Activated CD8-positive, alpha-beta memory T cell treated with anti-CD3 and anti-CD28 coated beads, Interleukin-2, amount 10 ng/mL, durations not matched to agents 7 days and 5 days (primary cell): ENCODE measurements at regions of chr1 and their contacts with region 1.

Region 1: DNA sequence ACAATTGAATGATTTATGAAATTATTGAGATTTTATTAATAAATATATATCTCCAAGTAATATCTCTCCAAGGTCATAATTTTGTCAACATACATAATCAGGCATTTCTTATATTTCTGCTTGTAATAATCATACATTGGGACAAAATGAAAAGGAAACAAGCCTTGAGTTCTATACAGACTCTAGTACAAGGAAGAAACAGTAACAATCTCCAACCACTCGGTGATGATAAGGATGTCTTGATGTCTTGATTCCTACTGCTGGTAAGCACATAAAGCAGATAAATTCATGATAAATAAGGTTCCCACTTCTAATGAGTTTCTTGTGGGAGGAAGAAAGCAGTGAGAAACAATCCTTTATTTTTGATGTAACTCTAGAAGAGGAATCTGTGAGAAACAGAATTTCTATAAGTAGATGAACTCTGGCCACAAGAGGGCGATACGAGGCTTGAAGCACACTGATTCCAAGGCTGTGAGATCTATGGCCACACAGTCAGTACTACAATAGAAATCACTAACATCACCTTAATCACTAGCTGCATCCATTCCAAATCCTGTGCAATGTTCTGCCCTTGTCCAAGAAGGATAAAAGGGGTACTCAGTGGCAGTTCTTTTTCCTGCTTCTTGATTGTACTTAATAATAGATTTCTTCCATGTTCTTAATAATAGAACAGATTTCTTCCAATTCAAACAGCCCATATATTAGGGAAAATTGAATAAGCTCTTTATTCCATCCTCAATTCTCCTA is 41.4 kb upstream of the LRRC8B start:
- DNase-seq: peak; percentile 89
- ATAC-seq: peak; percentile 82
- H3K4me3 Mint-ChIP-seq: no peak overlapping the region
- H3K27ac Mint-ChIP-seq: no peak overlapping the region
- H3K4me1 Mint-ChIP-seq: peaks cover 19% of the 10 kb centered on the region
- H3K27me3 Mint-ChIP-seq: no peaks in the 10 kb centered on the region

Region 2: DNA sequence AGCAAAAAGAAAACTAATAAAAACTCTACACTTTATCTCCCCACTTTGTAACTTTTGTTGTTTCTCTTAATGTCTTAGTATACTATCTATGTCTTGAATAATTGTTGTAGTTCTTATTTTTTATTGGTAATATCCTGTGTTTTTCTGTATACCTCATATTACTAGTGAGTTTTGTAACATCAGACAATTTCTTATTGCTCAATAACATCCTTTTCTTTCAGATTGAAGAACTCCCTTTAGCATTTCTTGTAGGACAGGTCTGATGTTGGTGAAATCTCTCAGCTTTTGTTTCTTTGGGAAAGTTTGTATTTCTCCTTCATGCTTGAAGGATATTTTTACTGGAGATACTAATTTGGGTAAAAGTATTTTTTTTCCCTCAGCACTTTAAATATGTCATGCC is 38.4 kb before region 1 on chr1:
- CTCF ChIA-PET with region 1: no interaction called
- DNase-seq: no peak
- ATAC-seq: no peak
- H3K4me3 Mint-ChIP-seq: no peak overlapping the region
- H3K27ac Mint-ChIP-seq: no peak overlapping the region
- H3K4me1 Mint-ChIP-seq: no peaks in the 10 kb centered on the region
- H3K27me3 Mint-ChIP-seq: peaks cover 12% of the 10 kb centered on the region

Region 3: GRCh38 chr1:89499320-89499719 is 16.1 kb after region 1 on chr1:
- CTCF ChIA-PET with region 1: interaction called, 14 read pairs
- DNase-seq: no peak
- ATAC-seq: no peak
- H3K4me3 Mint-ChIP-seq: no peak overlapping the region
- H3K27ac Mint-ChIP-seq: no peak overlapping the region
- H3K4me1 Mint-ChIP-seq: no peaks in the 10 kb centered on the region
- H3K27me3 Mint-ChIP-seq: peaks cover 13% of the 10 kb centered on the region

Region 4: GRCh38 chr1:89538361-89538760 is 55.2 kb after region 1 on chr1:
- CTCF ChIA-PET with region 1: no interaction called
- DNase-seq: no peak
- ATAC-seq: no peak
- H3K4me3 Mint-ChIP-seq: no peak overlapping the region
- H3K27ac Mint-ChIP-seq: peak overlapping the region; percentile 3
- H3K4me1 Mint-ChIP-seq: peaks cover 45% of the 10 kb centered on the region
- H3K27me3 Mint-ChIP-seq: no peaks in the 10 kb centered on the region

Region 5: GRCh38 chr1:89632657-89633247 is 149.6 kb after region 1 on chr1 and contains the start of gene LRRC8C:
- CTCF ChIA-PET with region 1: interaction called, 12 read pairs
- DNase-seq: peak; percentile 91
- ATAC-seq: peak; percentile 81
- H3K4me3 Mint-ChIP-seq: peak within 1 kb of the TSS; percentile 93
- H3K27ac Mint-ChIP-seq: peak within 1 kb of the TSS; percentile 94
- H3K4me1 Mint-ChIP-seq: peaks cover 72% of the 10 kb centered on the region
- H3K27me3 Mint-ChIP-seq: no peaks in the 10 kb centered on the region
- total RNA-seq, gene LRRC8C: 43.5 to 44.3 TPM